PC-3 (cell line): ENCODE measurements at regions of chrX and their contacts with region 1.

Region 1: GRCh38 chrX:45515262-45516215 is 314.9 kb upstream of the DIPK2B start:
- DNase-seq: peak; percentile 97
- ATAC-seq: peak; percentile 84
- H3K4me3 ChIP-seq: no peak overlapping the region
- H3K27ac ChIP-seq: peak overlapping the region; percentile 99
- H3K4me1 ChIP-seq: peaks cover 48% of the 10 kb centered on the region
- H3K27me3 ChIP-seq: no peaks in the 10 kb centered on the region
- CTCF ChIP-seq: peak; percentile 87

Region 2: DNA sequence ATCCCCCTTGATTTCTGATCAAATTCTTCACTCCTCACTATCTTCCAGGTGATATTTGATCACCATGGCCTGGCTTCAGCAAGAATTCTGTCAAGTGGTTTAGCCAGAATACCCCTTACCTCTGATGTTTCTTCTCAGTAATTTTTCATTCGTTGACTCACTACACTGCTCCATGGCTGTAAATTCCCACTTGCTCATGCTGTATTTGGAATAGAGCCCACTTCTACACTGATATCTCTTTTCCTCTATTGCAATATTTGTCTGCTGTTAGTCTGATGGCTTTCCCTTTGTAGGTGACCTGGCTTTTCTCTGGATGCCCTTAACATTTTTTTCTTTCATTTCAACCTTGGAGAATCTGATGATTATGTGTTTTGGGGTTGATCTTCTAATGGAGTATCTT is 241.0 kb before region 1 on chrX:
- CTCF ChIA-PET with region 1: no interaction called
- POLR2A ChIA-PET with region 1: no interaction called
- intact Hi-C with region 1: no loop called
- DNase-seq: peak; percentile 40
- ATAC-seq: no peak
- H3K4me3 ChIP-seq: no peak overlapping the region
- H3K27ac ChIP-seq: no peak overlapping the region; the same call in 1 of the 2 replicates
- H3K4me1 ChIP-seq: peaks cover 4% of the 10 kb centered on the region; the same call in 1 of the 2 replicates
- H3K27me3 ChIP-seq: no peaks in the 10 kb centered on the region
- CTCF ChIP-seq: no peak

Region 3: DNA sequence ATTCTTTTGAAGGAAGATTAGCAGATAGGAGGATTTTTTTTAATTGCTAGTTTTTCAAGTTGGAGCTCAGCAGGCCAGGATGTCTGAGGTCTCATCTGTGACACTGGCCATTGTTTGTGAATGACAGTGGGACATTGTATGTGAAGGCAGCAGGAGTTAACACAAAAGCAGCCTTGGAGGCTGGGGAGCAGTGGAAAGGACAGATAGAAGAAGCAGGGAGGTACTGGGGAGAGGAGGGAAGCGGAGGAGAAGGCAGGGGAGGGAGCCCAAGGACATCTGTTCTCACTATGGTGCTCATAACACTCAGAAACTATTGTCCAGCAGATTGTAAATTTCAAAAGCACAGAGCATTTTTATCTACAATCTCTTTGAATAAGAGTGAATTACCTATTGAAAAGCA is 61.3 kb before region 1 on chrX:
- CTCF ChIA-PET with region 1: no interaction called
- POLR2A ChIA-PET with region 1: no interaction called
- intact Hi-C with region 1: no loop called
- DNase-seq: no peak
- ATAC-seq: no peak
- H3K4me3 ChIP-seq: no peak overlapping the region
- H3K27ac ChIP-seq: no peak overlapping the region
- H3K4me1 ChIP-seq: peaks cover 26% of the 10 kb centered on the region
- H3K27me3 ChIP-seq: no peaks in the 10 kb centered on the region
- CTCF ChIP-seq: no peak

Region 4: DNA sequence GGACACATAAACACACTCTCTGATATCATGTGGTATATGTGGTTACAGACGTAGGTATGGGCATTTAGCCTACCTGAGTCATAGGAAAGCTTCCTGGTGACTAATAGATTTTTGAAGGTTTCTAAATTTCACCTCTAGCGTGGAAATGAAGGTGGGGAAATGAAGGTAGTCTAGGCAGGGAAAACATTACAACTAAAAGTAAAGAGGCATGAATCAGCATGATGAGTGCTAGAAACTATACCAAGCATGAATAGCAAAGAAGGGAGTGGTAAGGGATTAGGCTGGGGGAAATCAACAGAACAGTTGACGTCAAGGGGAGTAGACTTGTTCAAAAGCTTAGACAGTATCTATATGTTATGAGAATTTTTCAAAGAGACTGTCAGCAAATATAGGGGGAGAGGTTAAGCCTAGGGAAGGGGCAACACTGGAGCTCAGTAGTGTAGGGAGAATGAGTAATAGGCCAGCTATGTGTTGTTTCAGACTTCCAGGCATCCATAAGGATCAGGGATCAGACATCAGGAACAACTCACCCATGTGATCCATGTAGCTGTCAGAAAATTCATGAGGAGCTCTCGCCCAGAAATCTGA is 35.6 kb before region 1 on chrX:
- CTCF ChIA-PET with region 1: no interaction called
- POLR2A ChIA-PET with region 1: no interaction called
- intact Hi-C with region 1: loop called (anchors 1 kb)
- DNase-seq: peak; percentile 96
- ATAC-seq: peak; percentile 83
- H3K4me3 ChIP-seq: no peak overlapping the region
- H3K27ac ChIP-seq: peak overlapping the region; percentile 100
- H3K4me1 ChIP-seq: peaks cover 48% of the 10 kb centered on the region
- H3K27me3 ChIP-seq: no peaks in the 10 kb centered on the region
- CTCF ChIP-seq: no peak

Region 5: DNA sequence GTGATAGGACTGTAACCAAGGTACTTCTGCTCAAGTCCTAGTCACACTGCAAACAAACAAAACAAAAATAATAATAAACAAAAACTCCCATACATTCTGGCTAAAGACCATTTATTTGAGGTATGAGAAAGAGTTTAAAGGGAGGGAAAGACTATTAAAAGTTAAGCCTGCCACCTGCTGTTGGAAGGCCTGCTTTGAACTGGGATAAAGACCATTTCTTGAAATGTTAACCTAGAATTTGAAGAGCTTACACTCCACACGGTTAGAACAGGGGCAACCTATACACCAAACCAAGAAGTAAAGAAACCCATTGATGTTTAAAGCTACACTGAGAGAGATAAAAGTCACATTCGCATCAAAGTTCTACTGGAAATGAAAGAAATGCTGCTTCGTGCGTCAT is 233.8 kb after region 1 on chrX:
- CTCF ChIA-PET with region 1: interaction called, 3 read pairs
- POLR2A ChIA-PET with region 1: interaction called, 12 read pairs
- intact Hi-C with region 1: loop called (anchors 1 kb)
- DNase-seq: peak; percentile 60
- ATAC-seq: peak; percentile 14
- H3K4me3 ChIP-seq: no peak overlapping the region
- H3K27ac ChIP-seq: peak overlapping the region; percentile 77
- H3K4me1 ChIP-seq: peaks cover 95% of the 10 kb centered on the region
- H3K27me3 ChIP-seq: no peaks in the 10 kb centered on the region
- CTCF ChIP-seq: peak; percentile 64; the same call in 1 of the 2 replicates

Region 6: GRCh38 chrX:45824471-45824870 is 308.9 kb after region 1 on chrX:
- CTCF ChIA-PET with region 1: no interaction called
- POLR2A ChIA-PET with region 1: no interaction called
- intact Hi-C with region 1: loop called (anchors 1 kb)
- DNase-seq: peak; percentile 96
- ATAC-seq: peak; percentile 96
- H3K4me3 ChIP-seq: no peak overlapping the region
- H3K27ac ChIP-seq: peak overlapping the region; percentile 71
- H3K4me1 ChIP-seq: peaks cover 33% of the 10 kb centered on the region
- H3K27me3 ChIP-seq: no peaks in the 10 kb centered on the region
- CTCF ChIP-seq: peak; percentile 91